Gastrocnemius medialis (tissue), 4 donors: ENCODE measurements at regions of chr4 and their contacts with region 1.

Region 1: GRCh38 chr4:75514131-75514948 is at the starts of genes RCHY1 and THAP6:
- DNase-seq: peak; percentile 95
- ATAC-seq: peak; percentile 96 to 98
- H3K4me3 ChIP-seq: peak within 1 kb of the TSS; percentile 86 to 93 (median 88)
- H3K27ac ChIP-seq: peak within 1 kb of the TSS; percentile 95 to 96 (median 95)
- H3K4me1 ChIP-seq: peaks cover 50 to 57% of the 10 kb centered on the region in 2 donors
- H3K27me3 ChIP-seq: no peaks in the 10 kb centered on the region
- CTCF ChIP-seq: peak in 3 of 5 experiments; percentile 9 to 37 (median 15)
- POLR2A ChIP-seq: peak; percentile 74 to 82
- total RNA-seq, gene RCHY1: 14.0 to 18.7 (median 15.8) TPM
- total RNA-seq, gene THAP6: 6.0 to 27.3 (median 13.9) TPM

Region 2: DNA sequence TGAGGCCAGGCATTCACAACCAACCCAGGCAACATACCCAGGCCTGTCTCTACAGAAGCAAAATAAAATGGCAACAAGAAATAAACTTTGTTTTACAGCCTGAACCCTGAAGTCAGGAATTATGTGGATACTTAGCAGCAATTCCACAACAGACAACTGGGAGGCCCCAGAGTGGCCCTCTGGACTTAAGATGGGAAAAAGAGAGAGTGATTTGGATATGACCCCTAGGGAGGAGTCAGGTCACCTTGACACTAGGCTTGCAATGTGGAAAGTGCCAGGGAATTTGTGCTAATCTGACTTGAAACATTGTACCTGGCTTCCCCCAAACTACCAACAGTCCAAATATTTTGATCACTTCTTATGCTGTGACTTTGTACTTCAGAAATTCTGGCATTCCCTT is 388.3 kb before region 1 on chr4:
- in situ Hi-C with region 1: no loop called
- intact Hi-C with region 1: no loop called
- DNase-seq: no peak
- ATAC-seq: no peak
- H3K4me3 ChIP-seq: no peak overlapping the region
- H3K27ac ChIP-seq: no peak overlapping the region
- H3K4me1 ChIP-seq: no peaks in the 10 kb centered on the region
- H3K27me3 ChIP-seq: no peaks in the 10 kb centered on the region
- CTCF ChIP-seq: no peak
- POLR2A ChIP-seq: no peak

Region 3: GRCh38 chr4:75422998-75423397 is 91.3 kb before region 1 on chr4:
- in situ Hi-C with region 1: no loop called
- intact Hi-C with region 1: no loop called
- DNase-seq: no peak
- ATAC-seq: no peak
- H3K4me3 ChIP-seq: no peak overlapping the region
- H3K27ac ChIP-seq: no peak overlapping the region
- H3K4me1 ChIP-seq: no peaks in the 10 kb centered on the region
- H3K27me3 ChIP-seq: no peaks in the 10 kb centered on the region
- CTCF ChIP-seq: no peak
- POLR2A ChIP-seq: no peak

Region 4: GRCh38 chr4:75940692-75941253 is 426.4 kb after region 1 on chr4 and contains the start of gene NAAA:
- in situ Hi-C with region 1: no loop called
- intact Hi-C with region 1: loop called (anchors 2 kb)
- DNase-seq: peak; percentile 27 to 81
- ATAC-seq: peak; percentile 65 to 90
- H3K4me3 ChIP-seq: peak within 1 kb of the TSS; percentile 77 to 92 (median 82)
- H3K27ac ChIP-seq: peak within 1 kb of the TSS; percentile 72 to 88 (median 80)
- H3K4me1 ChIP-seq: no peaks in the 10 kb centered on the region
- H3K27me3 ChIP-seq: no peaks in the 10 kb centered on the region
- CTCF ChIP-seq: peak in 3 of 5 experiments; percentile 27 to 51 (median 44)
- POLR2A ChIP-seq: peak; percentile 20 to 30
- total RNA-seq, gene NAAA: 18.5 to 69.8 (median 42.3) TPM